ENCODE measurements at regions of chr3 and their contacts with region 1.

Region 1: DNA sequence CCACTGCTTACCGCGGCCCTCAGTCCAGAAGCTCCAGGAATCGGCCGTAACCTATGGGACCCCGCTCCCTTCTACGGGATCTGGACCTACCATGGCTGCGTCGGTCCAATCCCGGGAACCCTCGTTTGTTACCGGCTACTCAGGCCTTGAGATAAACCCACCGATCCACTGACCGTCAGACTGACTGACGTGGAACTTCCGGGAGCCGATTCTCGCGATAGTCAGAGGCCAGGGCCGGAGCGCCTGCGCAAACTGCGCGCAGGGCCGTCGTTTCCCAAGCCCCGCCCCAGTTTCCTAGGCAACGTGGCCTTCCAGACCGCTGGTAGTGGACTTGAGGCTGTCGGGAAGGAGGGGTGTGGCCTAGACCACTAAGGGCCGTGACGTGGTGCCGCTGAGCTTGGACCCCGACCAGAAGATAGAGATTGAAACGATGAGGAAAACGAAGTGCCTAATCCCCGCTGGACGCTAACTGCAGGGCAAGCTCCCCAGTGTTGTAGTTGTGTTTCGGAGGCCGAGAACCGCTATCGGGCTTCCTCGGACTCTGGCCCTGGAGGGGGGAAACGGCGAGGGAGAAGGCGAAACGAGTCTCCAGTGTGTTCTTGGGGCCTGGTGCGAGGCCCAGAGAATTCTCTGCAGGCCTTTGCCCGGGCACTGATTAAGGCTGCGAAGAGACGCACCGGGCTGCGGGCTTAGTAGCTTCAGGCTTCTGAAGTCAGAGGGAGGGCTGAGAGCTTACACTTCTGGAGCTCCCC is at the start of gene COPB2:
- DNase-seq: peak; percentile 94
- H3K4me3 Mint-ChIP-seq: peak within 1 kb of the TSS; percentile 97
- H3K27ac Mint-ChIP-seq: peak within 1 kb of the TSS; percentile 98
- H3K4me1 Mint-ChIP-seq: peaks cover 39% of the 10 kb centered on the region
- H3K27me3 Mint-ChIP-seq: peaks cover 3% of the 10 kb centered on the region
- total RNA-seq, gene COPB2: 119 and 120 TPM in 2 replicates

Region 2: DNA sequence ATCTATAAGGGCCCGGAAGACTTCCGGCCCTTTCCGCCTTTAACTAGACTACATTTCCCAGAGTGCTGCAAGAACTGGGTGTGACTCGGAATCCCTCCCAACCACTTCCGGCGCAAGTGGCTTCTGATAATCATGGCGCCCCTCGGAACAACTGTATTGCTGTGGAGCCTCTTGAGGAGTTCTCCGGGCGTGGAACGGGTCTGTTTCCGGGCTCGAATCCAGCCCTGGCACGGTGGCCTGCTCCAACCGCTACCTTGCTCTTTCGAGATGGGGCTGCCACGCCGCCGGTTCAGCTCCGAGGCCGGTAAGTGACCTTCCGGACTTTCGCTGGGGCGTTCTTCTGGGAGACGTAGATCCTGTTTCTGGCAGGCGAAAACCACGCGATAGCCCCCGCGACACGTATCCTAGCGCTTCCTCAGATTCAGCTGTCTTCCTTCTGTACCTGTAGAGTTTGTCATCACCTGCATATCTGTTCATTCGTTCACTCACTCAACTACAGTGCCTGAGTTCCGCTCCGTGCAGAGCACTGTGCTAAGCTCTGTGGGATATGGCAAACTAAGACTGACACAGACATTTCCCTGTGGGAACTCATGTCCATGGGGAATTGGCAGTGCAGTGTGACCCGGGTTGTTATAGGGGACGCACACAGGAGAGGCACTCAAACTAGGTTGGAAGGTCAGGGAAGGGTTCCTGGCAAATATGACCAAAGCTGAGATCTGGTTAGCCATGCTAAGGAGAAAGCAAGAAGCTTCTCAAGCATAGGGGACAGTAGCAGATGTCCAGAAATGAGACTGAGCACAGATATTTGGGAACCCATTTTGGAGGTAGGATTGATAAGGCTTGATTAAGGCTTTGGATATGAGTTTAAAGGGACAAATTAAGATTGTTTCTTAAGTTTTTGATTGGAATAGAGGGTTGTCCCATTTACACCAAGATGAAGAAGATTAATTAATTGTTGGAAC is 45.5 kb before region 1 on chr3 and contains the start of gene MRPS22:
- intact Hi-C with region 1: loop called (anchors 1 kb)
- DNase-seq: peak; percentile 78
- H3K4me3 Mint-ChIP-seq: no peak within 1 kb of the TSS
- H3K27ac Mint-ChIP-seq: peak within 1 kb of the TSS; percentile 6
- H3K4me1 Mint-ChIP-seq: peaks cover 15% of the 10 kb centered on the region
- H3K27me3 Mint-ChIP-seq: no peaks in the 10 kb centered on the region
- total RNA-seq, gene MRPS22: 51.2 and 51.9 TPM in 2 replicates

Region 3: GRCh38 chr3:139358841-139359562 is 30.6 kb before region 1 on chr3:
- intact Hi-C with region 1: loop called (anchors 2 kb)
- DNase-seq: no peak
- H3K4me3 Mint-ChIP-seq: no peak overlapping the region
- H3K27ac Mint-ChIP-seq: no peak overlapping the region
- H3K4me1 Mint-ChIP-seq: peaks cover 25% of the 10 kb centered on the region
- H3K27me3 Mint-ChIP-seq: no peaks in the 10 kb centered on the region

Region 4: DNA sequence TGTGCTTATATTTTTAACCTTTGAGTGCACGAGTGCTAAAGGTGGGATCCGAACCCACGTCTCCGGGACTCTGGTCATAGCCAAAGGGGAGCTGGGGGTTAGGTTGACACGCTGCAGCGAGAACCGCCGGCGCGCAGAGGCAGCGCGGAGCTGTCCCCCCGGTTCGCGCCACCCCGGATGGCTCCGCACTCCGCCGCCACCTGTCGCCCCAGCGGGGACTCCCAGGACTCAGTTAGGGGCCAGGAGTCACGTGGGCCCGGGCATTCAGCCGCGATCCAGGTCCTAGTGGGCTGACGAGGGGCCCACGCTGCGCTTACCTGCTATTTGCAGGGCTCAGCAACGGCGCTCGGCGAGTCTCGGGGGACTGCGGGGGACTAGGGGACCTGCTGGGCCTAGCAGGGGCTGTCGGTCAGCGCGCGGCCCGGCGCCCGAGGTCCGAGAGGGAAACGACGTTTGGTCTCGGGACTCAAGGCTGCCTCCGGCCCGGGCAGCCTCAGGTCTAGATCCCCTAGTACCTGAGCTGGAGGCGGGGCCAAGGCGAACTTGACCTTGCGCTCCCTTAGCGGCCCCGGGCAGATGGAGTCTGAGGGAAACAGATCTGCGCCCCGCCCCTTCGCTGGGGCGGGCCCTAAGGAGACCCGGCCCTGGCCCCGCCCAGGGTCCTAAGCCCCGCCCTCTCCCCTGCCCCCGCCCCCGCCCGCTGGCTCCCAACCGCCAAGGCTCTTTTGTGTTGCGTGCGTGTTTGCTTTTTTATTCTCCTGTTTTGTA is 287.9 kb after region 1 on chr3 and contains the start of gene NMNAT3:
- intact Hi-C with region 1: loop called (anchors 5 kb)
- DNase-seq: peak; percentile 69
- H3K4me3 Mint-ChIP-seq: peak within 1 kb of the TSS; percentile 74
- H3K27ac Mint-ChIP-seq: no peak within 1 kb of the TSS
- H3K4me1 Mint-ChIP-seq: peaks cover 4% of the 10 kb centered on the region
- H3K27me3 Mint-ChIP-seq: peaks cover 20% of the 10 kb centered on the region
- total RNA-seq, gene NMNAT3: 0.43 and 1.3 TPM in 2 replicates